ENCODE measurements at regions of chr5 and their contacts with region 1.

Region 1: DNA sequence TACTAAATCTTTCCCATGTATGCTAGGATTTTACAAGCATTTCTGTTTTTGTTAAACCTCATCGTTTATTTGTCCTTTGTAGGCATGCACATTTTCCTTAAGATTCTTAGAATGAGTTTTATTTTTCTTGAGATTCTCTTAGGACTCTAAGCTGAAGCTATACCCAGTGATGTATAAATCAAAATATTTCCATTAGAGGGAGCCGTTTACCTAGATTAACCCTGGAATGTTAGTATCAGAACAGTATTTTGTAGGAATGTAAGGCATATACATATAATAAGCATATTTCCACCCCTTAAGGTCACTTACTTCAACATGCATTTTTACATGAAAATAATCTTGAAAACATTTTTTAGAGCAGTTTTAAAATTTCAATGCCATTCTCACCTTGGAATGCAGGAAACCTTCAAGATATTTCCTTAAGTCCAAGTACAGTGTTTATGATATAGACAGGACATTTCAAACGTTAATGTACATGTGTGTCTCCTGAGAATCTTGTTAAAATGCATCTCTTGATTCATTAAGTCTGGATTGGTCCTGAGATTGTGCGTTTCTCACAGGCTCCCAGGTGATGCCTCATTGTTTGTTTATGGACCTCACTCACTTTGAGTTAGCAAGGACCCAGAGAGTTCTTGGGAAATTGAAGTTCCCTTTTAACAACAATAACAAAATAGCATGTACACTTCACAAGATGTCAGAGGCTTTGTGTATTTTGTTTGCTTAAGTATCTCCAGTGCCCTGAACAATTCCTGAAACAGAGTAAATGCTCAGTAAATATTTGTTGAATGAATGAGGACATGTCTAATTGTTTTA is 34.9 kb upstream of the FCHO2 start:
- DNase-seq: peak; percentile 26
- ATAC-seq: peak; percentile 84
- H3K4me3 ChIP-seq: no peak overlapping the region
- H3K27ac ChIP-seq: no peak overlapping the region
- H3K4me1 ChIP-seq: no peaks in the 10 kb centered on the region
- H3K27me3 ChIP-seq: no peaks in the 10 kb centered on the region
- CTCF ChIP-seq: peak; percentile 25 to 70 (median 66); a peak in 5 of 6 replicates
- POLR2A ChIP-seq: no peak
- RAD21 ChIP-seq: peak; percentile 84

Region 2: GRCh38 chr5:73066466-73066865 is 145.6 kb after region 1 on chr5:
- CTCF ChIA-PET with region 1: no interaction called
- POLR2A ChIA-PET with region 1: no interaction called
- RAD21 ChIA-PET with region 1: no interaction called
- intact Hi-C with region 1: loop called (anchors 10 kb)
- DNase-seq: no peak
- ATAC-seq: no peak
- H3K4me3 ChIP-seq: no peak overlapping the region
- H3K27ac ChIP-seq: no peak overlapping the region
- H3K4me1 ChIP-seq: 0 out of 4 replicates have a peak, but pooled peaks cover 0 to 3% of the 10 kb centered on the region in 2 experiments
- H3K27me3 ChIP-seq: no peaks in the 10 kb centered on the region
- CTCF ChIP-seq: no peak
- POLR2A ChIP-seq: no peak
- RAD21 ChIP-seq: no peak

Region 3: DNA sequence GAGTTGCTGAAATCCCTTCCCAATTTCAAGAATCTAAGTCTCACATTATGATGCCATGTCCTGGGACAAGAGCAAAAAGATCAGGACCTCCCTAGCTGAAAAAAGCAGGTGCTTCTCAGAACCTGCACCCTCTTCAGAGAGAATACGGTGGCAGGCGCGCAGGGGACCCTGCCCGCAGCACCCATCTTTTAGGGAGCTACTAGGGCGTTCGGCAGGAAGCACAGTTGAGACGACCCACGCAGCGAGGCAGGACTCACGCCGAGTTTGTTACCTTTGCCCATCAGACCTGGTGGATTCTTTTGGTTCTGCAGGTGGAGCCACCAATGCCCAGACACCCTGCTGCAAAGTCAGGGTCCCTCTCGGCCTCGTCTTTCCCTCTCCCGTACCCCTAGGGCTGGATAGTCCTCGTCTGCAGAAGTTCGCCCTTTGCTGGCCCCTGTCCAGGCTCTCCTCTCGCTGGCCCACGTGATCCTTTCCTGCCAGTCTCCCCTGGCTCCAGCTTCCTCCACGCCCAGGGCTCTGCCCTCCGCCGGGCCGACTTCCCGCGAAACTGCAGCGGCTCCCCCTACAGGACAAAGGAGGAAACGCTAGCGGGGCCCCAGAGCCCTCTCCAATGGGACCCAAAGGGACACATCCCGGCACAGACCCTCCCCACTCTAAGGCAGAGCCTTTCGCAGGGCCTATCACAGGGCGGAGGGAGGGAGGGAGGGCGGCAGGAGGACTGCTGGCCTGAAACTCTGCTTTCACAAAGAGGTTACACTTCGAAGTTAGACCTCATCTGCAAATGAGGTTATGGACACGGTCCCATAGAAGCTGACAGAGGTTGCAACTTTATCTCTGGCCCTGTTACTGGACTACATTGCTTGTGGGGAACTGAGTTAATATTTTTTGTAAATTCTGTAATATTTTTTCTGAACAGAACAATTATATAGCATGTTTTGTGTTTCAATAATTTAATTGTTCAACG is 280.9 kb after region 1 on chr5:
- CTCF ChIA-PET with region 1: interaction called, 4 read pairs
- POLR2A ChIA-PET with region 1: no interaction called
- RAD21 ChIA-PET with region 1: no interaction called
- intact Hi-C with region 1: loop called (anchors 1 kb)
- DNase-seq: peak; percentile 78
- ATAC-seq: peak; percentile 98
- H3K4me3 ChIP-seq: no peak overlapping the region
- H3K27ac ChIP-seq: no peak overlapping the region
- H3K4me1 ChIP-seq: peaks cover 0 to 13% of the 10 kb centered on the region in 2 experiments; a peak in 3 of 4 replicates
- H3K27me3 ChIP-seq: no peaks in the 10 kb centered on the region
- CTCF ChIP-seq: peak; percentile 81 to 94 (median 87)
- POLR2A ChIP-seq: no peak
- RAD21 ChIP-seq: peak; percentile 89

Region 4: DNA sequence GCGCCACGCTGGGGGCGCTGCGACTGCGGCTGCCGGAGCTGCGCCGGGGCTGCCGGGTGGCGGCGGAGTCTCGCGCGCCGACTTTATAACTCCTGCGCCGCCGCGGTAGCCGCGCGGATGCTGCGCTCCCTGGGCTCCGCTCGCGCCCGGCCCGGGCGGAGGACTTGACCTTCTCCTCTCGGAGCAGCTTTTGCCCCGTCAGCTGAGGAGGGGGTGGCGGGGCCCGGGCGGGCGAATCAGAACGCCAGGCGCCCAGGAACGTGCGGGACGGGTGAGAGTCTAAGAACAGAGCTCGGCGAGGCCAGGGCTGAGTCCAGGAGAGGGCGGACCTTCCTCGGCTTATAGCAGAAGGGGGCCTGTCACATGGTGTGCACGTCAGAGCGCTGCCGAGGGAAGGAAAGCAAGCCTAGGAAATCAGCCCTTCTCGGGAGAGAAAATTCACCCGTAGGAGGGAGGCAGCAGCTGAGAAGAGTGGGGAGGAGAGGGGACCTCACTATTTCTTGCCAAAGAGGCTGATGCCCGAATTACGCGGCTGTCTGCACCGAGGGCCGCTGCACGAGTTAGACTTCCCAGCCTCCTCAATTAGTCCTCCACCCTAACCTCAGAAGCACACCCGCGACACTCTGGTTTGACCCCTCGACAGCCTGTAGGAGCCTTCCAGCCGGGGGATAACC is 527.7 kb after region 1 on chr5 and contains the start of gene FOXD1:
- CTCF ChIA-PET with region 1: interaction called, 3 read pairs
- POLR2A ChIA-PET with region 1: no interaction called
- RAD21 ChIA-PET with region 1: no interaction called
- intact Hi-C with region 1: loop called (anchors 2 kb)
- DNase-seq: peak; percentile 92
- ATAC-seq: peak; percentile 88
- H3K4me3 ChIP-seq: peak within 1 kb of the TSS; percentile 64 to 67
- H3K27ac ChIP-seq: peak within 1 kb of the TSS; percentile 89
- H3K4me1 ChIP-seq: peaks cover 12 to 29% of the 10 kb centered on the region in 2 experiments; a peak in 3 of 4 replicates
- H3K27me3 ChIP-seq: no peaks in the 10 kb centered on the region
- CTCF ChIP-seq: no peak
- POLR2A ChIP-seq: peak; percentile 67
- RAD21 ChIP-seq: no peak
- total RNA-seq, gene FOXD1: 26.8 TPM

Region 5: GRCh38 chr5:73534011-73534644 is 613.2 kb after region 1 on chr5:
- CTCF ChIA-PET with region 1: no interaction called
- POLR2A ChIA-PET with region 1: no interaction called
- RAD21 ChIA-PET with region 1: no interaction called
- intact Hi-C with region 1: loop called (anchors 10 kb)
- DNase-seq: no peak
- ATAC-seq: no peak
- H3K4me3 ChIP-seq: no peak overlapping the region
- H3K27ac ChIP-seq: no peak overlapping the region
- H3K4me1 ChIP-seq: 0 out of 4 replicates have a peak, but pooled peaks cover 0 to 3% of the 10 kb centered on the region in 2 experiments
- H3K27me3 ChIP-seq: no peaks in the 10 kb centered on the region
- CTCF ChIP-seq: no peak
- POLR2A ChIP-seq: no peak
- RAD21 ChIP-seq: no peak

Region 6: DNA sequence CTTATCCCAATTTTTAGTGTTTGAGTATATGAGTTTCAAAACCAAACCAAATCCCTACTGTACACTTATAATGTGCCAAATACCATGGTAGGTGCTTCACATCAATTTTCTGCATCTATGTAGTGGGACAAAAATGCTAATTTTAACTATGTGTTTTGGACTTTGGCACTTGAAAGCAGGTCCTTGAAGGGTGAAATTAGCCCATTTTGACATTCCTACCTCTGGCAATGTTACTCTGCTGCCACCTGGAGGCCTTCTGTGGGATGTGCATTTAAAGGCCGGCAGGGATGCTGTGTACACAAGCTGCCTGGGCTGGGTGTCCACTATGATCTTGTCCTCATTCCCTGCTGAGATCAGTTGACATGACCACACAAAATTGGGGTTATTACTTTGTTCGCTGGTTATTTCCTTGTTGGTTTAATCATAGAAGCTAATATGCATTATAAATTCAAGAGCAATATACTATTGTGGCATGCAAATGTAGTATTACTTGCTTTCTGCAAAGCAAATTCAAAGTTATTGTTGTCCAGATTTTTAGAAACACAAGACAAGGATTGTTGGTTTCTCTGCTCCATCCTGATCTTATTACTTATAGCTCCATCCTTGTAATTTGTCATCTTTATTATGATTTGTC is 871.9 kb after region 1 on chr5:
- CTCF ChIA-PET with region 1: no interaction called
- POLR2A ChIA-PET with region 1: no interaction called
- RAD21 ChIA-PET with region 1: no interaction called
- intact Hi-C with region 1: loop called (anchors 5 kb)
- DNase-seq: peak; percentile 43
- ATAC-seq: peak; percentile 93
- H3K4me3 ChIP-seq: no peak overlapping the region
- H3K27ac ChIP-seq: no peak overlapping the region
- H3K4me1 ChIP-seq: no peaks in the 10 kb centered on the region
- H3K27me3 ChIP-seq: no peaks in the 10 kb centered on the region
- CTCF ChIP-seq: peak; percentile 80 to 97 (median 93)
- POLR2A ChIP-seq: no peak
- RAD21 ChIP-seq: peak; percentile 93

Measured in HCT116 (cell line).